CD8-positive, alpha-beta T cell (primary cell): ENCODE measurements at regions of chr19 and their contacts with region 1.

Region 1: GRCh38 chr19:6372594-6373095 is at the start of gene ALKBH7:
- DNase-seq: peak; percentile 90 to 100 (median 95)
- ATAC-seq: peak; percentile 75
- H3K4me3 ChIP-seq: peak within 1 kb of the TSS; percentile 67 to 86
- H3K4me3 Mint-ChIP-seq: peak within 1 kb of the TSS; percentile 92
- H3K27ac ChIP-seq: peak within 1 kb of the TSS; percentile 70 to 93
- H3K27ac Mint-ChIP-seq: peak within 1 kb of the TSS; percentile 93
- H3K4me1 ChIP-seq: peaks cover 12% of the 10 kb centered on the region
- H3K4me1 Mint-ChIP-seq: peaks cover 14% of the 10 kb centered on the region
- H3K27me3 ChIP-seq: no peaks in the 10 kb centered on the region
- H3K27me3 Mint-ChIP-seq: no peaks in the 10 kb centered on the region
- CTCF ChIP-seq: no peak
- total RNA-seq, gene ALKBH7: 63.6 to 66.2 TPM

Region 2: GRCh38 chr19:5622463-5623396 is 749.9 kb before region 1 on chr19 and contains the starts of genes SAFB and SAFB2:
- CTCF ChIA-PET with region 1: no interaction called
- POLR2A ChIA-PET with region 1: no interaction called
- intact Hi-C with region 1: loop called in 1 of 2 experiments (anchors 5 kb)
- DNase-seq: peak; percentile 99 to 100 (median 99)
- ATAC-seq: peak; percentile 87
- H3K4me3 ChIP-seq: peak within 1 kb of the TSS; percentile 91 to 93
- H3K4me3 Mint-ChIP-seq: peak within 1 kb of the TSS; percentile 100
- H3K27ac ChIP-seq: peak within 1 kb of the TSS; percentile 90 to 94
- H3K27ac Mint-ChIP-seq: peak within 1 kb of the TSS; percentile 99
- H3K4me1 ChIP-seq: peaks cover 77% of the 10 kb centered on the region
- H3K4me1 Mint-ChIP-seq: peaks cover 69% of the 10 kb centered on the region
- H3K27me3 ChIP-seq: no peaks in the 10 kb centered on the region
- H3K27me3 Mint-ChIP-seq: no peaks in the 10 kb centered on the region
- CTCF ChIP-seq: no peak
- total RNA-seq, gene SAFB: 190 to 191 TPM
- total RNA-seq, gene SAFB2: 293 to 302 TPM

Region 3: GRCh38 chr19:5790573-5791520 is 581.8 kb before region 1 on chr19 and contains the start of gene DUS3L:
- CTCF ChIA-PET with region 1: no interaction called
- POLR2A ChIA-PET with region 1: no interaction called
- intact Hi-C with region 1: loop called in 1 of 2 experiments (anchors 2 kb)
- DNase-seq: peak; percentile 91 to 98 (median 94)
- ATAC-seq: peak; percentile 95
- H3K4me3 ChIP-seq: peak within 1 kb of the TSS; percentile 86 to 91
- H3K4me3 Mint-ChIP-seq: peak within 1 kb of the TSS; percentile 97
- H3K27ac ChIP-seq: peak within 1 kb of the TSS; percentile 94 to 97
- H3K27ac Mint-ChIP-seq: peak within 1 kb of the TSS; percentile 99
- H3K4me1 ChIP-seq: peaks cover 7% of the 10 kb centered on the region
- H3K4me1 Mint-ChIP-seq: peaks cover 17% of the 10 kb centered on the region
- H3K27me3 ChIP-seq: no peaks in the 10 kb centered on the region
- H3K27me3 Mint-ChIP-seq: peaks cover 2% of the 10 kb centered on the region
- CTCF ChIP-seq: no peak
- total RNA-seq, gene DUS3L: 174 to 192 TPM

Region 4: DNA sequence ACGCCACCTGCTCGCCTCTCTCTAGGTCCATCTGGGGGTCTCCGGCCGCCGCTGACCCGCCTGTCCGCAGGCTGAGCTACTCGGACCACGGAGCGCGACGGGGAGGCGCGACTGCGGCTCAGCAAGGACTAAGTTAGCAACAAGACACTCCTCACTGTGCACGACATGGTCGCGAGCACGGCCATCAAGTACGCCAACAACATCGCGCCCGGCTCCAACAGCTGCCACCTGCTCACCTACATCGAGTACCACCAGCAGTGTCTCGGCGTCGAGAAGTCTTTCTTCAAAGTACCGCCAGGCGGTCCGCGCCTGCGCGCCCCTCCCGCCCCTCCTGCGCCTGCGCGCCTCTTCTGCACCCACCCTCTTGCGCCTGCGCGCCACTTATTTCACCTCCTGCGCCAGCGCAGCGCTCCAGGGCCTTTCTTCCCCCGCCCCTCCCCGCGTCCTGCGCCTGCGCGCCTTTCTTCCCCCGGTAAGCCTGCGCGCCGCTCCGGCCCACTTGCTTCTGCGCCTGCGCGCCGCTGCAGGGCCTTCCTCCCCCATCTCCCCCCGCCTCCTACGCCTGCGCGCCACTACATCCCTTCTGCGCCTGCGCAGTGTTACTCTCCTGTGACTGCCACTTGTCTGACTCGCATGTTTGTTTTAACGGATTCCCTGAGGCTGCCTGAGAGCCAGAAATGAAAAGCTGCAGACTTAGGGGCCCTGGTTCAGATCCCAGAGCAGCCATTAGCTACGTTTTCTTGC is 173.2 kb before region 1 on chr19:
- CTCF ChIA-PET with region 1: no interaction called
- POLR2A ChIA-PET with region 1: interaction called, 3 read pairs
- intact Hi-C with region 1: loop called in 1 of 2 experiments (anchors 5 kb)
- DNase-seq: peak; percentile 98 to 100 (median 100)
- ATAC-seq: peak; percentile 90
- H3K4me3 ChIP-seq: peak overlapping the region; percentile 80 to 99
- H3K4me3 Mint-ChIP-seq: peak overlapping the region; percentile 94
- H3K27ac ChIP-seq: peak overlapping the region; percentile 65 to 73
- H3K27ac Mint-ChIP-seq: peak overlapping the region; percentile 87
- H3K4me1 ChIP-seq: peaks cover 11% of the 10 kb centered on the region
- H3K4me1 Mint-ChIP-seq: peaks cover 10% of the 10 kb centered on the region
- H3K27me3 ChIP-seq: no peaks in the 10 kb centered on the region
- H3K27me3 Mint-ChIP-seq: peaks cover 3% of the 10 kb centered on the region
- CTCF ChIP-seq: peak; percentile 51

Region 5: GRCh38 chr19:6393074-6393983 is 20.7 kb after region 1 on chr19 and contains the start of gene GTF2F1:
- CTCF ChIA-PET with region 1: no interaction called
- POLR2A ChIA-PET with region 1: interaction called, 7 read pairs
- intact Hi-C with region 1: loop called (anchors 1 kb)
- DNase-seq: peak; percentile 89 to 98 (median 95)
- ATAC-seq: peak; percentile 84
- H3K4me3 ChIP-seq: peak within 1 kb of the TSS; percentile 89 to 97
- H3K4me3 Mint-ChIP-seq: peak within 1 kb of the TSS; percentile 88
- H3K27ac ChIP-seq: peak within 1 kb of the TSS; percentile 98 to 100
- H3K27ac Mint-ChIP-seq: peak within 1 kb of the TSS; percentile 98
- H3K4me1 ChIP-seq: peaks cover 16% of the 10 kb centered on the region
- H3K4me1 Mint-ChIP-seq: peaks cover 25% of the 10 kb centered on the region
- H3K27me3 ChIP-seq: no peaks in the 10 kb centered on the region
- H3K27me3 Mint-ChIP-seq: no peaks in the 10 kb centered on the region
- CTCF ChIP-seq: no peak
- total RNA-seq, gene GTF2F1: 65.2 to 67.9 TPM

Region 6: GRCh38 chr19:6460101-6460853 is 87.6 kb after region 1 on chr19:
- CTCF ChIA-PET with region 1: no interaction called
- POLR2A ChIA-PET with region 1: no interaction called
- intact Hi-C with region 1: loop called (anchors 1 kb)
- DNase-seq: peak; percentile 93 to 98 (median 96)
- ATAC-seq: peak; percentile 85
- H3K4me3 ChIP-seq: peak overlapping the region; percentile 73 to 87
- H3K4me3 Mint-ChIP-seq: peak overlapping the region; percentile 94
- H3K27ac ChIP-seq: peak overlapping the region; percentile 62 to 69
- H3K27ac Mint-ChIP-seq: peak overlapping the region; percentile 81
- H3K4me1 ChIP-seq: peaks cover 20% of the 10 kb centered on the region
- H3K4me1 Mint-ChIP-seq: peaks cover 32% of the 10 kb centered on the region
- H3K27me3 ChIP-seq: peaks cover 0 to 3% of the 10 kb centered on the region in 2 experiments
- H3K27me3 Mint-ChIP-seq: no peaks in the 10 kb centered on the region
- CTCF ChIP-seq: peak; percentile 54

Region 7: DNA sequence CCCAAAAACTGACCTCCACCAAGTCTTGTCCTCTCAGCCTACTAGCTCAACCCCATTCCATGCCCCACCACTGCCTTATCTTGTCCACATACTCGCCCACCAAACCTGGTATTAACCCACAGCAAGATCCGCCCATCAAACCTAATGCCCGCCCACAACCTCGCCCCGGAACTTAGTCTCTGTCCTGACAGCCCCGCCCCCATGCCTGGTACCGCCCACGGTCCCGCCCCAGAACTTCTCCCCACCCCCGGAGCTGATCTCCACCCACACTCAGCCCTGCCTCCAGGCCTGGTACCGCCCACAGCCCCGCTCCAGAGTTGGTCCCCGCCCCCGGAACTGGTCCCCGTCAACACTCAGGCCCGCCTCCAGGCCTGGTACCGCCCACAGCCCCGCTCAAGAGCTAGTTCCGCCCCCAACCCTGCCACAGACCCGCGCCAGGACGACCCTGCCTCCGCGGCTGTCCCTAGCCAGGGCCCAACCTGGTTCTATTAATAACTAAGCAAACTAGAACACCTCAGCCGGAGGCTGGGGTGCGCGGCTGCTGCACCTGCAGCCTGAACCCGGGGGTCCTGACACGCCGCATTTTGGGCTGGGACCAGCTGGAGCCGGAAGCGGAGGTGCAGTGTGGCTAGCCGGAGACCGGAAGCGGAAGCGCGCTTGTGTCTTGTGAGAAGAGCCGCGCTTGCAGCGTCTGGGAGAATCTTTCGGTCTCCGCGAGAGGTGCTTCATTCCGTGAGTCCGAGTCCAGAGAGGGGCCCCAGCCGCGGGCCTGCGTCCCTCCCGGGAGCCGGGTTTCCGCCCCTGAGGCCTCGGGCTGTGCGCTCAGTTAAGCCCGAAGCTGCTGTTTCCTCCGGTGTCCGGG is 696.6 kb after region 1 on chr19 and contains the start of gene ZNF557:
- CTCF ChIA-PET with region 1: no interaction called
- POLR2A ChIA-PET with region 1: no interaction called
- intact Hi-C with region 1: loop called in 1 of 2 experiments (anchors 5 kb)
- DNase-seq: peak; percentile 98 to 99 (median 99)
- ATAC-seq: peak; percentile 97
- H3K4me3 ChIP-seq: peak within 1 kb of the TSS; percentile 76 to 99
- H3K4me3 Mint-ChIP-seq: peak within 1 kb of the TSS; percentile 94
- H3K27ac ChIP-seq: peak within 1 kb of the TSS; percentile 81 to 95
- H3K27ac Mint-ChIP-seq: peak within 1 kb of the TSS; percentile 96
- H3K4me1 ChIP-seq: peaks cover 21% of the 10 kb centered on the region
- H3K4me1 Mint-ChIP-seq: peaks cover 25% of the 10 kb centered on the region
- H3K27me3 ChIP-seq: no peaks in the 10 kb centered on the region
- H3K27me3 Mint-ChIP-seq: no peaks in the 10 kb centered on the region
- CTCF ChIP-seq: no peak
- total RNA-seq, gene ZNF557: 19.7 to 20.0 TPM